H1 (cell line): ENCODE measurements at regions of chr10 and their contacts with region 1.

Region 1: DNA sequence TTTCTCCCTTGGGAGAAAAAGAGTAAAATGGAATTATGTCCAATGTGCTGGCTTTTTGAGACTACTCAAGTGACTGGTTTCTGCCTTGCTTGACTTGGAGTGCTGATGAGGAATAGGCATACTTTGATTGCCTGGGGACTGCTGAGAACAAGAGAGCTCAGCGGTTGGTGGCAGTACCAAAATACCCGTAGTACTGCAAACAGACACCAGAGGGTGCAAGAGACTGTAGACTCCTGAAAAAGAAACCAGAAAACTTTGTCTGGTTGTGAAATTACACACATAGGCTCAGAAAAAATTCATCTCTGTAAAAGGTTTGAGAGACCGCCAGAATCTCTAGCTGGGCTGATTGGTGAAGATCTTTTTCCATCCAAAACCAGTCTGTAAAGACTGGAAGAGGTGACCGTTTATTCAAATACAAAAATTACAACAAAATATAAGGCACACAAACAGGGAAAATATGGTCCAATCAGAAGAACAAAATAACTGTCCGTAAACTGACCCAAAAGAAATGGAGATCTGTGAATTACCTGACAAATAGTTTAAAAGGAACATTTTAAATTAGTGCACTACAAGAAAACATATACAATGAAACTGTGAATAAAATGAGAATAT is 18.5 kb downstream of the BICC1 start:
- DNase-seq: peak in 1 of 2 experiments; percentile 81
- H3K4me3 ChIP-seq: no peak overlapping the region
- H3K27ac ChIP-seq: no peak overlapping the region
- H3K4me1 ChIP-seq: no peaks in the 10 kb centered on the region
- H3K27me3 ChIP-seq: no peaks in the 10 kb centered on the region
- CTCF ChIP-seq: peak; percentile 8 to 71 (median 68)
- EP300 ChIP-seq: no peak
- POLR2A ChIP-seq: no peak
- RAD21 ChIP-seq: peak; percentile 85 to 86

Region 2: GRCh38 chr10:58237014-58237830 is 294.0 kb before region 1 on chr10:
- CTCF ChIA-PET with region 1: no interaction called
- POLR2A ChIA-PET with region 1: no interaction called
- DNase-seq: no peak
- H3K4me3 ChIP-seq: no peak overlapping the region
- H3K27ac ChIP-seq: no peak overlapping the region
- H3K4me1 ChIP-seq: peaks cover 0 to 7% (median 4%) of the 10 kb centered on the region in 4 experiments; a peak in 2 of 7 replicates
- H3K27me3 ChIP-seq: no peaks in the 10 kb centered on the region
- CTCF ChIP-seq: no peak
- EP300 ChIP-seq: no peak
- POLR2A ChIP-seq: no peak
- RAD21 ChIP-seq: no peak

Region 3: DNA sequence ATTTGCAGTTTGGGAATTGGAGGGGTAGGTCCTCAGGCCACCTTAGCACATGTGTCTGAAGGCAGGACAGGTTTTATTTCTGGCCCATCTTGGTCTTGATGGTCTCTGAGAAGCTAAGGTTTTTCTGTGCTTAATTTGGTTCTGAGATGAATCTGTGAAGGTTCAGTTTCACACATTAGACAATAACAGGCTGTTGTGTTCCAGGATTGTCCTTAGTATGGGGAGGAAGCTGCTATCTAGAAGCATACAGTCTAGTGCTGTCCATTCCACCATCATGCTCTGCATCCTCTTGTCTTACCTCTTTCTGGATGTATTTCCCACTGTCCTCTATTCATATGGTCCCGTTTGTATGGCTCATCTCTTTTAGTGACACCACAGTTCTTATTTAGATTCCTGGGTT is 189.2 kb before region 1 on chr10:
- CTCF ChIA-PET with region 1: no interaction called
- POLR2A ChIA-PET with region 1: no interaction called
- DNase-seq: no peak
- H3K4me3 ChIP-seq: no peak overlapping the region
- H3K27ac ChIP-seq: no peak overlapping the region
- H3K4me1 ChIP-seq: no peaks in the 10 kb centered on the region; a peak in 1 of 7 replicates
- H3K27me3 ChIP-seq: no peaks in the 10 kb centered on the region
- CTCF ChIP-seq: no peak
- EP300 ChIP-seq: no peak
- POLR2A ChIP-seq: no peak
- RAD21 ChIP-seq: no peak

Region 4: GRCh38 chr10:58372607-58373441 is 158.4 kb before region 1 on chr10:
- CTCF ChIA-PET with region 1: no interaction called
- POLR2A ChIA-PET with region 1: no interaction called
- DNase-seq: no peak
- H3K4me3 ChIP-seq: no peak overlapping the region
- H3K27ac ChIP-seq: no peak overlapping the region
- H3K4me1 ChIP-seq: no peaks in the 10 kb centered on the region
- H3K27me3 ChIP-seq: no peaks in the 10 kb centered on the region
- CTCF ChIP-seq: no peak
- EP300 ChIP-seq: no peak
- POLR2A ChIP-seq: no peak
- RAD21 ChIP-seq: no peak

Region 5: DNA sequence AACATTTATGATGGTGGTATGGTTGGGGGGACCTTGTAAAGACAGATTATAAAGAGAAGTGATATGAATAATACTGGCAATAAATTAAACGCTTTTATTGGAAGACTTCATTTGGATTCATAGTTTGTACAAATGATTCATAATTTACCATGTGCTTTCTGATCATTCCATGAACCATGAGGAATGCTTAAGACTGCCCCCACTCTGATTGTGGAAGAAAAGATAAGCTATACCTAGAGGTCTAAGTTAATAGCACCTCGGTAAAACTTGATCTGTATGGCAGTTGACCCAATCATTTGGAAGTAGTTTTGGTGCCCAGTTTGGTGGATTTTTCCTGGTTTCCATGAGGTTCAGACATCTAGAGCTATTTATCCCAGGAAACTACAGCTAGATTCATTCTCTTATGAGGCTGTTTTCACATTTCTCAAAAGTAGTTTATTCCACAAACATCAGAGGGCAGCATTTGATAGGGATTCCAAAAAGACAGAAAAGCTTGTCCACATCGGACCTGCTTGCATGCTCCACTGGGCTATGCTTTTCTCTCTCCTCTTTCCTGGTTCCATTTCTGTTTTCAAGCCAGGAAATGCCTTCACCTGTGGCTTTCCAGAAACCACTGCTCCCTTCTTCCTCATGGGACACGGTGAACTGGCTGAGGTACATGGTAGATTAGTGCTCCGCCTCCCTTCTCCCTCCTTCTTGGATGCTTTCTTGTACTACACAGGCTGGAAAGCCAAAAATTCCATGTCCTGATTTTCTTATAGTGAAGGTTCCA is 116.7 kb before region 1 on chr10:
- CTCF ChIA-PET with region 1: interaction called, 38 read pairs
- POLR2A ChIA-PET with region 1: no interaction called
- DNase-seq: no peak
- H3K4me3 ChIP-seq: no peak overlapping the region
- H3K27ac ChIP-seq: no peak overlapping the region
- H3K4me1 ChIP-seq: peaks cover 0 to 6% (median 0%) of the 10 kb centered on the region in 4 experiments; a peak in 2 of 7 replicates
- H3K27me3 ChIP-seq: no peaks in the 10 kb centered on the region
- CTCF ChIP-seq: peak in 2 of 3 experiments; percentile 37 to 42; a peak in 2 of 4 replicates
- EP300 ChIP-seq: no peak
- POLR2A ChIP-seq: no peak
- RAD21 ChIP-seq: peak; percentile 80 to 82

Region 6: DNA sequence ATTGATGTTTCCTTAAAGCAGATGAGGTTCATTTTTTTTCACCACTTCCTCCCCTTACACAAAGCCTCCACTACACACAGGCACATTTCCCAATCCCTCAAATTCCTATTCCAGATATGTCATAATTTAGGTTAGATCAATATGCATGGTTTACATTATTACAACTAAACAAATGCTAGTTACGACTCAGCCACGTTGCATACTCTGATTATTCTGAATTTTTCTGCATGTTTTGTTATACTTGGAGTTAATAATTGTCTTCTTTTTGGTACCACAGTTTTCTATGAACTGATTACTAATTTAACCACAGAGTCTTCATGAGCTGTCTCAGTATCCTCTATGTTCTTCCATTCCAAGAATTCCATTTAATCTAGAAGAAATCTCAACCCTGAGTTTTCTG is 22.9 kb before region 1 on chr10:
- CTCF ChIA-PET with region 1: interaction called, 17 read pairs
- POLR2A ChIA-PET with region 1: no interaction called
- DNase-seq: no peak
- H3K4me3 ChIP-seq: no peak overlapping the region
- H3K27ac ChIP-seq: no peak overlapping the region
- H3K4me1 ChIP-seq: peaks cover 0 to 4% (median 2%) of the 10 kb centered on the region in 4 experiments; a peak in 4 of 7 replicates
- H3K27me3 ChIP-seq: peaks cover 3 to 18% (median 11%) of the 10 kb centered on the region in 4 experiments; a peak in 6 of 7 replicates
- CTCF ChIP-seq: no peak
- EP300 ChIP-seq: no peak
- POLR2A ChIP-seq: no peak
- RAD21 ChIP-seq: no peak

Region 7: DNA sequence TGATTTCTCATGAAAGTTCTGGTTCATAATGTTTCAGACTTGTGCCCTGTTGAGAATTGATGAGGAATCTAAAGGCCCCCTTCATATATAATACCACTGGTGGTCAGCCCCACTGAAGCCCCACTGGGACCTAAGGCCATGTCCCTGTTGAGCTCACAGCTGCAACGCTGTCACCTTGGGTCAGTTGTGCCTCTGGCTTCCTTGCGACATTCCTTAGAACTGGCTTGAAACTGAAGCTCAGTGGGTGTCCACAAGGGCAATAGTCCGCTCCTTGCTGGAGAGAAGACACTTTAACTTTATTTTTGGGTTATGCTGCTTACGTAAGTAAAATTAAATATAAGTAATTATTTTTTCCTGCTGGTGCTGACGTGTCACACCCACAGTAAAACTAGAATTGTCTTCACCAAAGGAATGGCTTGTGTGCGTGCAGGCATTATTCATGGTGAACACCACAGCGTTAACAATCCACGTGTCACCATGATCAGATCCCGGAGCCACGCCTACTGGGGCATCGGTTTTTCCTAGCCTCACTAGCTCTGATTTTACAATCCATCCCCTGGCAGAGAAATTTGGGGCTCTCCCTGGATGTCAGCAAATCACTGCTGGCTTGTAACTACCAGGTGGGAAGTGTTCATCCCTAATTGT is 47.9 kb after region 1 on chr10:
- CTCF ChIA-PET with region 1: interaction called, 12 read pairs
- POLR2A ChIA-PET with region 1: no interaction called
- DNase-seq: no peak
- H3K4me3 ChIP-seq: no peak overlapping the region
- H3K27ac ChIP-seq: no peak overlapping the region
- H3K4me1 ChIP-seq: peaks cover 0 to 3% (median 0%) of the 10 kb centered on the region in 4 experiments; a peak in 1 of 7 replicates
- H3K27me3 ChIP-seq: no peaks in the 10 kb centered on the region
- CTCF ChIP-seq: no peak
- EP300 ChIP-seq: no peak
- POLR2A ChIP-seq: no peak
- RAD21 ChIP-seq: no peak

Region 8: DNA sequence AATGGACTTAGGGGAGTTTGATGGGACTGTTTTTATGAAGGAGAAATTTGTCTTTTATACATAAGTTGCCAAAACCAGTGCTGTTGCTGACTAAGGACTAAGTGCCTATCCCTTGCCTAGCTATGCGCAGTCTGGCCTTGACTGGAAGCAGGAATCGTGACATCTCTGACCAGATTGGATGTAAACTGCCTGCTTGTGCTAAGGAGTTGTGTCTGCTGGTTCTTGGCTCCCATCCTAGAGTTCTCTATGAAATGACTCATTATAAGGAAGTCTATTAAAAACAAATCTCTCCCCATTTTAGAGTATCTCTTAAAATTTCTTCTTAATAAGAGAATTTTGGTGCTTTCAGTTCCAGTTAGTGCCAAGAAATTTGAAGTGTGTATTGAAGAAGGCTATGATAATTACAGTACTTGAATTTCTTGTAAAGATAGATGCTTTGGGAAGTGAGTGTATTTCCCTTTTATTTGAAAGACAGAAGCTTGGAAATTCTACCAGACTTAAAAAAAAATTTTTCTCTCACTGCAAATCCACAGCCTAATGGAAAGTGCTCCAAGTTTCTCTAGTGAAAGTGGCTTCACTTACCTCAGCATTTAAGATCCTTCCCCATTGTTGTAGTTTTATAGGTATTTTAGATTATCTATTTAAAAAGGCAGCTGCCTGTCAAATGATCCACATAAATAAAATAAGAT is 59.1 kb after region 1 on chr10:
- CTCF ChIA-PET with region 1: interaction called, 33 read pairs
- POLR2A ChIA-PET with region 1: no interaction called
- DNase-seq: no peak
- H3K4me3 ChIP-seq: no peak overlapping the region
- H3K27ac ChIP-seq: no peak overlapping the region
- H3K4me1 ChIP-seq: no peaks in the 10 kb centered on the region
- H3K27me3 ChIP-seq: no peaks in the 10 kb centered on the region
- CTCF ChIP-seq: no peak
- EP300 ChIP-seq: no peak
- POLR2A ChIP-seq: no peak
- RAD21 ChIP-seq: no peak

Region 9: DNA sequence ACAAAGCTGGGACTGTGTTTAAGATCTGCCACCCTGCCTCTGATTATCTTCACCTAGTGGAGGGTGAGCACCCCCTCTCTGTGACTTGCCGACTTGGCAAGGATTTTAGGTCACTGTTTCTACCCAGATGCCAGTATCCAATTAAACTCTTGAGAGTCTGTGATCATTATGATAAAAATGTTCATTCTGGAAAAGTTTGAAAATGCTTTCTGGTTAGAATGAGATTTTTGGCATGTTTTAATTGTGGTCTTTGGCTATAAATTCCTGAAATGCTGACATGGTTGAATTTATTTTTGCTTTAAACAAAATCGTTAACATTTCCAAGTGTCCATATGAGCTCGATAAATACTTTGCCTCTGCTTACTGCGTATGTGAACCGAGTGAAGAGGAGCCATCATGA is 202.9 kb after region 1 on chr10:
- CTCF ChIA-PET with region 1: interaction called, 11 read pairs
- POLR2A ChIA-PET with region 1: no interaction called
- DNase-seq: no peak
- H3K4me3 ChIP-seq: no peak overlapping the region
- H3K27ac ChIP-seq: no peak overlapping the region
- H3K4me1 ChIP-seq: no peaks in the 10 kb centered on the region
- H3K27me3 ChIP-seq: no peaks in the 10 kb centered on the region
- CTCF ChIP-seq: peak; percentile 26 to 44 (median 40)
- EP300 ChIP-seq: no peak
- POLR2A ChIP-seq: no peak
- RAD21 ChIP-seq: peak; percentile 53 to 67

Region 10: DNA sequence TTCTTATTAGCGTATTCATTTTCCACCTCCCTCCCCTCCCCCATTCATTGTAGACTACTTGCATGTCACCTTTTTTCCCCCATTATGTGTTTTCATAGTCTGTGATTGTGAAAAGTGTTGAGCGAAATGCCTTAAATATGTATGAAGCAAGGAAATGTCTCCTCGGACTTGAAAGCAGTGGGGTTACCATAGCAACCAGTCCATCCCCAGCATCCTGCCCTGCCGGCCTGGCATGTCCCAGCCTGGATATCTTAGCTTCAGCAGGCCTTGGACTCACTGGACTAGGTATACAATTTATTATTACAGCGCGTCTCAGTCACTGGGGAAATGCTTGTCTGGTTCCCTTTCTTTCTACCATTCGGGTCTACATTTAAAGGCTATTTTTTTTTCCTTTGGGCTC is 265.1 kb after region 1 on chr10:
- CTCF ChIA-PET with region 1: no interaction called
- POLR2A ChIA-PET with region 1: no interaction called
- DNase-seq: no peak
- H3K4me3 ChIP-seq: no peak overlapping the region
- H3K27ac ChIP-seq: no peak overlapping the region
- H3K4me1 ChIP-seq: no peaks in the 10 kb centered on the region
- H3K27me3 ChIP-seq: no peaks in the 10 kb centered on the region
- CTCF ChIP-seq: no peak
- EP300 ChIP-seq: no peak
- POLR2A ChIP-seq: no peak
- RAD21 ChIP-seq: no peak